ENCODE measurements at regions of chr22 and their contacts with region 1.

Region 1: DNA sequence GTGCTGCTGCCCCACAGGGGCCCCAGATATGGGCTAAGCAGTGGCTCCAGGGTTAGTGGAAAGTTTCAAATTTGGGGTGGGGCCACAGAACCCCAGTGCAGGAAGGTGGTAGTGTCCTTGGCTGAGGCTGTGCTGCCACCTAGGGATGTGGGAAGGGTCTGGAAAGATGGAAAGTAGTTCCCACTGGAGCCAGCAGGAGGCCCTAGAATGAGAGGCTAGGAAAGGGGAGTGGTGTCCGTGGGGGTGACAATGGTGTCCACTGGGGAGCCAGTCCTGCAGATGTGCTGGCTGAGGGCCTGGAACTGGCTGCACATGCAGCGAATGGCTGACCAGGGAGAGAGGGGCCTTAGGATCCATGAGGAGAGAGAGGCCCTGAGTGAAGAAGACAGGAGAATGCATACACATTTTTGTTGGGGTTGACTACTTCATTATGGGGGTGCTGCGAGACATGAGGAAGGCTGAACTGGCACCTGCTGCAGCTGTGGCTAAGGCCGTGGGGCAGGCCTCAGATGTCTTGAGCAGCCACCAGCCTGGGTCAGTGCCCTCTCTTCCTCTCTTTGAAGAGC is 21.1 kb downstream of the RFPL3 start:
- DNase-seq: peak; percentile 51
- ATAC-seq: peak; percentile 94
- H3K4me3 ChIP-seq: no peak overlapping the region
- H3K27ac ChIP-seq: no peak overlapping the region
- H3K4me1 ChIP-seq: no peaks in the 10 kb centered on the region
- H3K27me3 ChIP-seq: no peaks in the 10 kb centered on the region; a peak in 1 of 5 replicates
- CTCF ChIP-seq: peak; percentile 85
- EP300 ChIP-seq: no peak
- POLR2A ChIP-seq: no peak
- RAD21 ChIP-seq: peak; percentile 78

Region 2: GRCh38 chr22:32103658-32104315 is 275.0 kb before region 1 on chr22:
- CTCF ChIA-PET with region 1: no interaction called
- POLR2A ChIA-PET with region 1: no interaction called
- in situ Hi-C with region 1: no loop called
- intact Hi-C with region 1: loop called (anchors 10 kb)
- DNase-seq: no peak
- ATAC-seq: no peak
- H3K4me3 ChIP-seq: no peak overlapping the region
- H3K27ac ChIP-seq: no peak overlapping the region
- H3K4me1 ChIP-seq: no peaks in the 10 kb centered on the region
- H3K27me3 ChIP-seq: no peaks in the 10 kb centered on the region
- CTCF ChIP-seq: peak; percentile 32; the same call in 1 of the 2 replicates
- EP300 ChIP-seq: no peak
- POLR2A ChIP-seq: no peak
- RAD21 ChIP-seq: no peak